ENCODE measurements at regions of chr2 and their contacts with region 1.

Region 1: DNA sequence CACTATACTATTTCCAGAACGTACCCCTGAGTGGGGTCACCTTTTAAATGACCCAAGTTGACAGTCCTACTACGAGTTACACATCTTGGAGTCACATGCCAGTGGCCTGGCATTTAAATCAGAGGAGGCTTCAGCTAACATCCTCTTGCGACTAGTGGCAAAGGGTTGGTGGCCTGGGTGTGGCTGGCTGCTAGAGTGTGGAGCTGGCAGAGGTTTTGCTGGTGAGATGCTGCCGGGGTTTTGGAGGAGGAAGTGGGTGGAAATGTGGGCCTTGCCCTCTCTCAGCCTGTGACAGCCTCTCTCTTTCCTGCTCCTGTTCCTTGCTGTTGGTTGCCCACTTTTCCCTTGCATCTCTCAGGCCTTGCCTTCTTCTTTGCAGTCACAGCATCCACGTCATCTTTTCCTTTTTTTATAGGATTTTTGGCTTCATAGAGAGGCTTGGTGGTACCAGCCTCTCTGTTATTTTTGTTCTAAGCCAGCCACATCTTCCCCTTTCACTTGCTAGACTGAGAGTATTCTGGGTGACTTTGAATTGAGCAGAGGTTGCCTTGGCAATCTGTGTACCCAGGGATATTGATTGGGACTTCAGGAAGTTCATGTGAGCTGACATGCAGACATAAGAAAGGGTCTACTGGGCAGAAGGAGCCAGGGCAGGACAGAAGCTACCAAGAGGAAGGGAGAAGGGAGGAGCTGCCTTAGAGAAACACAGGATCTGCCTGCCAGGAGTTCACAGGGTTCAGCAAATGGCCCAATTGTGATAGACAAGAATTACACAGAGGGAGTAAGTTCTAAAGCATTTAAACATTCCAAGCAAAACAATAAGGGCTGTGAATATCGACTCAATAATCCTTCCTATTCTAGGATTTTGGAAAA is 55.4 kb downstream of the CDC42EP3 start:
- DNase-seq: no peak
- ATAC-seq: peak; percentile 58
- H3K4me3 ChIP-seq: no peak overlapping the region
- H3K27ac ChIP-seq: peak overlapping the region; percentile 72
- H3K4me1 ChIP-seq: peaks cover 17% of the 10 kb centered on the region
- H3K27me3 ChIP-seq: no peaks in the 10 kb centered on the region
- CTCF ChIP-seq: no peak
- EP300 ChIP-seq: no peak
- POLR2A ChIP-seq: no peak
- RAD21 ChIP-seq: no peak

Region 2: GRCh38 chr2:37376421-37377186 is 239.4 kb before region 1 on chr2:
- CTCF ChIA-PET with region 1: no interaction called
- POLR2A ChIA-PET with region 1: no interaction called
- RAD21 ChIA-PET with region 1: no interaction called
- SMC1A ChIA-PET with region 1: no interaction called
- in situ Hi-C with region 1: no loop called
- intact Hi-C with region 1: no loop called
- DNase-seq: peak; percentile 78
- ATAC-seq: peak; percentile 96
- H3K4me3 ChIP-seq: peak overlapping the region; percentile 41; the same call in 1 of the 2 replicates
- H3K27ac ChIP-seq: peak overlapping the region; percentile 43; the same call in 1 of the 2 replicates
- H3K4me1 ChIP-seq: peaks cover 24% of the 10 kb centered on the region
- H3K27me3 ChIP-seq: peaks cover 0 to 14% of the 10 kb centered on the region in 2 experiments; a peak in 1 of 4 replicates
- CTCF ChIP-seq: no peak
- EP300 ChIP-seq: peak; percentile 93 to 97; a peak in 3 of 4 replicates
- POLR2A ChIP-seq: no peak
- RAD21 ChIP-seq: no peak

Region 3: DNA sequence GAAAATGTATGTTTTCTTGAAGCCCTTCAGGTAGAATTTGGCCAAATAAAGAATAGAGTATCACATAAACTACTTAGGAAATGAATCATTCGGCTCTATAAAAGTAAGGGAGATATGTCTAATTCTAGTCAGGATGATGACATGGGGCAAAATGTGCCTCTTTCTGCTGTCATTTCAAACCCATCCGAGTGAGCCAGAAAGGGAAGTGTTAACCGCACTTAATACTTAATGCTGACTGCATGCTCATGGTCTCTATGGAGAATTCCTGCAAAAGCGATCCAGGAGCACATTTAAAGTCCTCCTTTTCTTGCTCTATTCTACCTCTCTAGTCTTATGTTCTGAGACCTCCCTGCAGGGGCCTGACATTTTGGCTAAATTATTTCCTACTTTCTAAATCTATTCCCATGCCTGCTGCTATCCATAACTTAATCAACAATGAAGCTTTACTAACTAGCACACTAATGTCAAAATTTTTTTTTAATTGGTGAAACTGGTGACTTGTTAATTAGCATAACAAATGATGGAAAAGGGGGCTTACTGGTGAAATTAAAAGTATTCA is 72.0 kb before region 1 on chr2:
- CTCF ChIA-PET with region 1: interaction called, 3 read pairs
- POLR2A ChIA-PET with region 1: interaction called, 9 read pairs
- RAD21 ChIA-PET with region 1: interaction called, 19 read pairs
- SMC1A ChIA-PET with region 1: interaction called, 97 read pairs
- in situ Hi-C with region 1: no loop called
- intact Hi-C with region 1: no loop called
- DNase-seq: no peak
- ATAC-seq: no peak
- H3K4me3 ChIP-seq: no peak overlapping the region
- H3K27ac ChIP-seq: no peak overlapping the region
- H3K4me1 ChIP-seq: peaks cover 8% of the 10 kb centered on the region; the same call in 1 of the 2 replicates
- H3K27me3 ChIP-seq: no peaks in the 10 kb centered on the region
- CTCF ChIP-seq: no peak
- EP300 ChIP-seq: no peak
- POLR2A ChIP-seq: no peak
- RAD21 ChIP-seq: no peak

Region 4: GRCh38 chr2:37585982-37586621 is 29.9 kb before region 1 on chr2:
- CTCF ChIA-PET with region 1: interaction called, 4 read pairs
- POLR2A ChIA-PET with region 1: interaction called, 126 read pairs
- RAD21 ChIA-PET with region 1: interaction called, 165 read pairs
- SMC1A ChIA-PET with region 1: interaction called, 178 read pairs
- in situ Hi-C with region 1: no loop called
- intact Hi-C with region 1: no loop called
- DNase-seq: peak; percentile 68
- ATAC-seq: peak; percentile 58
- H3K4me3 ChIP-seq: no peak overlapping the region
- H3K27ac ChIP-seq: peak overlapping the region; percentile 61
- H3K4me1 ChIP-seq: peaks cover 42% of the 10 kb centered on the region
- H3K27me3 ChIP-seq: no peaks in the 10 kb centered on the region
- CTCF ChIP-seq: no peak
- EP300 ChIP-seq: no peak
- POLR2A ChIP-seq: no peak
- RAD21 ChIP-seq: no peak

Region 5: GRCh38 chr2:37629529-37629928 is 13.5 kb after region 1 on chr2:
- CTCF ChIA-PET with region 1: interaction called, 32 read pairs
- POLR2A ChIA-PET with region 1: interaction called, 62 read pairs
- RAD21 ChIA-PET with region 1: interaction called, 36 read pairs
- SMC1A ChIA-PET with region 1: interaction called, 118 read pairs
- in situ Hi-C with region 1: no loop called
- intact Hi-C with region 1: no loop called
- DNase-seq: no peak
- ATAC-seq: peak; percentile 32
- H3K4me3 ChIP-seq: no peak overlapping the region
- H3K27ac ChIP-seq: peak overlapping the region; percentile 76
- H3K4me1 ChIP-seq: peaks cover 47% of the 10 kb centered on the region
- H3K27me3 ChIP-seq: no peaks in the 10 kb centered on the region
- CTCF ChIP-seq: no peak
- EP300 ChIP-seq: peak; percentile 35 to 41; a peak in 1 of 4 replicates
- POLR2A ChIP-seq: no peak
- RAD21 ChIP-seq: no peak; the same call in 1 of the 2 replicates

Region 6: GRCh38 chr2:37698931-37699481 is 83.0 kb after region 1 on chr2:
- CTCF ChIA-PET with region 1: no interaction called
- POLR2A ChIA-PET with region 1: no interaction called
- RAD21 ChIA-PET with region 1: no interaction called
- SMC1A ChIA-PET with region 1: no interaction called
- in situ Hi-C with region 1: no loop called
- intact Hi-C with region 1: no loop called
- DNase-seq: no peak
- ATAC-seq: no peak
- H3K4me3 ChIP-seq: no peak overlapping the region
- H3K27ac ChIP-seq: no peak overlapping the region
- H3K4me1 ChIP-seq: no peaks in the 10 kb centered on the region
- H3K27me3 ChIP-seq: no peaks in the 10 kb centered on the region
- CTCF ChIP-seq: no peak
- EP300 ChIP-seq: no peak
- POLR2A ChIP-seq: no peak
- RAD21 ChIP-seq: no peak

Measured in GM12878 (cell line).